ENCODE measurements at regions of chr6 and their contacts with region 1.

Region 1: GRCh38 chr6:42532038-42532669 is 31.7 kb upstream of the UBR2 start:
- DNase-seq: no peak
- H3K4me3 ChIP-seq: no peak overlapping the region
- H3K27ac ChIP-seq: no peak overlapping the region
- H3K4me1 ChIP-seq: no peaks in the 10 kb centered on the region
- H3K27me3 ChIP-seq: peaks cover 0 to 2% of the 10 kb centered on the region in 2 donors
- CTCF ChIP-seq: peak; percentile 78 to 82

Region 2: GRCh38 chr6:42217519-42218367 is 314.4 kb before region 1 on chr6 and contains the start of gene MRPS10:
- intact Hi-C with region 1: loop called (anchors 5 kb)
- DNase-seq: peak; percentile 92 to 95
- H3K4me3 ChIP-seq: peak within 1 kb of the TSS; percentile 71 to 74
- H3K27ac ChIP-seq: peak within 1 kb of the TSS; percentile 71 to 82
- H3K4me1 ChIP-seq: peaks cover 0 to 21% (median 7%) of the 10 kb centered on the region in 4 donors
- H3K27me3 ChIP-seq: no peaks in the 10 kb centered on the region
- CTCF ChIP-seq: no peak

Region 3: DNA sequence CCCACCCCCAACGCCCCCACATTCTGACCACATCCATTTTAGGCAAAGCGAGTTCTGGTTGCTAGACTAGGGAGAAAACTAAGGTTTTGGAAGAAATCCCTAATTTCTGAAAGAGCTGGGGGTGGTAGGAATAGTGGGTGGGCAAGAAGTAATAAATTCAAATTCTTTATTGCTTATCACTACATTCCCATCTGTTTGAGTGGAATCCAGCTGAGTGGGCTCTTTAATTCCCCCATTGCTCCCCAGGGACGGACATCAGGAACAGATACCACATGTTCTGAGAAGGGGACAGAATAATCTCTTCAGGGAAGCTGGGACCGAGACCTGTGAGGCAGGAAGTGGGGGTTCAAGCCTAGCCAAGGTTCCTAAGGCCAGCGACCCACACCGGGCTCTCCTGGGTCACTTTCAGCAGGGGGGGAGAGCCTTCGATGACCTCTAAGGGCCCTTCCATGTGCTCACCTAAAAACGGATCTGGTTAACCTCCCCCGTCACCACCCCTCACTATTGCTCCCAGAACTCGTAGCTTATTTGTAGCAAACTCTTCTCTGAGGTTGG is 272.2 kb before region 1 on chr6:
- intact Hi-C with region 1: loop called (anchors 5 kb)
- DNase-seq: no peak
- H3K4me3 ChIP-seq: no peak overlapping the region
- H3K27ac ChIP-seq: no peak overlapping the region
- H3K4me1 ChIP-seq: peaks cover 0 to 8% (median 0%) of the 10 kb centered on the region in 4 donors
- H3K27me3 ChIP-seq: no peaks in the 10 kb centered on the region
- CTCF ChIP-seq: no peak

Region 4: GRCh38 chr6:42440778-42441696 is 91.1 kb before region 1 on chr6:
- intact Hi-C with region 1: loop called (anchors 10 kb)
- DNase-seq: no peak
- H3K4me3 ChIP-seq: no peak overlapping the region
- H3K27ac ChIP-seq: peak overlapping the region; percentile 61 to 65
- H3K4me1 ChIP-seq: peaks cover 0 to 22% (median 2%) of the 10 kb centered on the region in 4 donors
- H3K27me3 ChIP-seq: no peaks in the 10 kb centered on the region
- CTCF ChIP-seq: no peak

Region 5: GRCh38 chr6:42471142-42471541 is 61.0 kb before region 1 on chr6:
- intact Hi-C with region 1: no loop called
- DNase-seq: no peak
- H3K4me3 ChIP-seq: no peak overlapping the region
- H3K27ac ChIP-seq: no peak overlapping the region
- H3K4me1 ChIP-seq: no peaks in the 10 kb centered on the region
- H3K27me3 ChIP-seq: no peaks in the 10 kb centered on the region
- CTCF ChIP-seq: no peak